Psoas muscle (tissue), 8 donors: ENCODE measurements at regions of chr2 and their contacts with region 1.

Region 1: GRCh38 chr2:158903711-158904443 is 64.6 kb upstream of the TANC1 start:
- DNase-seq: no peak
- ATAC-seq: no peak
- H3K4me3 ChIP-seq: no peak overlapping the region
- H3K27ac ChIP-seq: no peak overlapping the region
- H3K4me1 ChIP-seq: no peaks in the 10 kb centered on the region
- H3K27me3 ChIP-seq: no peaks in the 10 kb centered on the region
- CTCF ChIP-seq: no peak

Region 2: DNA sequence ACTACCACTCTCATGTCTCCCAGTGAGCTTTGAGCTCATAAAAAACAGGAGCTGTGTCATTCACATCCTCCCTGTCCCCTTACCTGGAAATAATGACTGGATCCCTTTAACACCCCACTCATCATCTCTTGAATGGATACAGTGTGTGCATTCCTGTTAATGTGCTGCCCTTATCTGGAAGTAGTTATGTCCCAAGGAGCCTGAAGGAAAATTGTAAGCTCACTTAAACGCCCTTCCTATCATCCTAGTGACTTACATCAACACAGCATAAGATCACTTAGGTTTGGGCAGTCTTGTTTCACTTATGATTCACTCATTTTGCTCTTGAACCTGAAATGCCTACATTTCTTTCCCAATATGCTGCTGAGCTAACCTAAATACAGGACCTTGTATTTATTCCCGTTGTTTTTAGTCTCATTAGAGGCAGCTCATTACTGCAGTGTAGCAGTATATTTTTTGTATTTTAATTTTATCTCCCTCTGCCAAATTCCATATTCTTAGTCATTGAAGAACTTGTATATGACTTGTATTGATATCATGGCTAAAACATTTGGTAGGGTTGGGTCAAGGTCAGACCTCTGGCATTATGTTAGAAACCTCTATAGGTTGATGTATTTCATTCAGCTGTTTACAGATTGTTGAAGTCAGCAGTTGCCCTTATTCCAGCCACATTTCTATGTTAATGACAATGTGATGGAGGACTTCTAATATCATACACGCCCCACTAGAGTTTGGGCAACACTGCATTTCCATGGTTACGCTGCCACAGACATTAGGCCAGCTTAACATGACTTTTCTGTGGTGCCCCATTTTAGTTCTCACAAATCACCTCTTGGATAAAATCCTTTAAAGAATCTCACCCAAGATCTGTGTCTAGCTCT is 374.3 kb before region 1 on chr2:
- intact Hi-C with region 1: no loop called
- DNase-seq: no peak
- ATAC-seq: no peak
- H3K4me3 ChIP-seq: no peak overlapping the region
- H3K27ac ChIP-seq: no peak overlapping the region
- H3K4me1 ChIP-seq: no peaks in the 10 kb centered on the region
- H3K27me3 ChIP-seq: no peaks in the 10 kb centered on the region
- CTCF ChIP-seq: no peak

Region 3: GRCh38 chr2:158968396-158969161 is 64.7 kb after region 1 on chr2 and contains the start of gene TANC1:
- intact Hi-C with region 1: loop called in 1 of 2 experiments (anchors 1 kb)
- DNase-seq: peak; percentile 91 to 93
- ATAC-seq: peak; percentile 96 to 97 (median 97)
- H3K4me3 ChIP-seq: peak within 1 kb of the TSS; percentile 74
- H3K27ac ChIP-seq: peak within 1 kb of the TSS; percentile 58
- H3K4me1 ChIP-seq: no peaks in the 10 kb centered on the region
- H3K27me3 ChIP-seq: no peaks in the 10 kb centered on the region
- CTCF ChIP-seq: no peak
- total RNA-seq, gene TANC1: 3.2 to 7.5 (median 4.8) TPM

Region 4: DNA sequence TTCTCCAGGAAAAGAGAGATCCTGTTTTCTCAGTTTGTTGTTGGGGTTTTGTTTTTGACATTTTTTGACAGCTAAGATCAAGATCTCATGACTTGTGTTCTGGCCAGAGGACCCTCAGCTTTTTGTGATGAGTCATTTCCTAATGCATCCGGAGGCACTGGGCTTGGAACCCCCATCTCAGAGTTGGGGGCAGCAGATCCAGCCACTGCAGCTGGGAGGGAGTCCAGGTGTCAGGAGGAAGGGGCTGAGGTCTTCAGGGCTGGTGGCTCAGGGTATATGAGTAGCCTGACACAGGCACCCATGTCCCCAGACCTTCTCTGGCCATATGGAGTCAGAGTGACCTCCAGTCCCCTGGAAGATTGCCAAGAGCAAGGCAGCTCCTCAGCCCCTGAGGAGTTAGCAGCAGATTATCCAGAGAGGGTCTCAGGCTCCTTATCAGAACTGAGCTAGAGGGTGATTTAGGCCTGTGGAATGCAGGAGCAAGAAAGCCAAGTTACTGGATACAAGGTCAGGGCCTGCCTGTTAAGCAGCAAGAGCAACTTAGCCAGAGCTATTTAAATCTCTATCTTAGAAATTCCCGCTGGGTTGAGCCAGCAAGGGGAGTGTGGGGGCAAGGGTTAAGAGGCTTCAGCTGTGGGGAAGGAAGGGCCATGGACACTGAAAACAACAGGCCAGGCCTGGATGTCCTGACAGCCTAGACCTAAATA is 127.0 kb after region 1 on chr2:
- intact Hi-C with region 1: loop called in 1 of 2 experiments (anchors 5 kb)
- DNase-seq: peak in 1 of 2 donors; percentile 23
- ATAC-seq: peak; percentile 77 to 92 (median 84)
- H3K4me3 ChIP-seq: no peak overlapping the region
- H3K27ac ChIP-seq: peak overlapping the region; percentile 73
- H3K4me1 ChIP-seq: peaks cover 25% of the 10 kb centered on the region
- H3K27me3 ChIP-seq: no peaks in the 10 kb centered on the region
- CTCF ChIP-seq: no peak

Region 5: GRCh38 chr2:159118115-159118858 is 214.4 kb after region 1 on chr2:
- intact Hi-C with region 1: loop called (anchors 2 kb)
- DNase-seq: peak; percentile 76 to 86
- ATAC-seq: peak; percentile 78 to 95 (median 88)
- H3K4me3 ChIP-seq: no peak overlapping the region
- H3K27ac ChIP-seq: no peak overlapping the region
- H3K4me1 ChIP-seq: peaks cover 10% of the 10 kb centered on the region
- H3K27me3 ChIP-seq: no peaks in the 10 kb centered on the region
- CTCF ChIP-seq: peak; percentile 97